ENCODE measurements at regions of chr2 and their contacts with region 1.

Region 1: DNA sequence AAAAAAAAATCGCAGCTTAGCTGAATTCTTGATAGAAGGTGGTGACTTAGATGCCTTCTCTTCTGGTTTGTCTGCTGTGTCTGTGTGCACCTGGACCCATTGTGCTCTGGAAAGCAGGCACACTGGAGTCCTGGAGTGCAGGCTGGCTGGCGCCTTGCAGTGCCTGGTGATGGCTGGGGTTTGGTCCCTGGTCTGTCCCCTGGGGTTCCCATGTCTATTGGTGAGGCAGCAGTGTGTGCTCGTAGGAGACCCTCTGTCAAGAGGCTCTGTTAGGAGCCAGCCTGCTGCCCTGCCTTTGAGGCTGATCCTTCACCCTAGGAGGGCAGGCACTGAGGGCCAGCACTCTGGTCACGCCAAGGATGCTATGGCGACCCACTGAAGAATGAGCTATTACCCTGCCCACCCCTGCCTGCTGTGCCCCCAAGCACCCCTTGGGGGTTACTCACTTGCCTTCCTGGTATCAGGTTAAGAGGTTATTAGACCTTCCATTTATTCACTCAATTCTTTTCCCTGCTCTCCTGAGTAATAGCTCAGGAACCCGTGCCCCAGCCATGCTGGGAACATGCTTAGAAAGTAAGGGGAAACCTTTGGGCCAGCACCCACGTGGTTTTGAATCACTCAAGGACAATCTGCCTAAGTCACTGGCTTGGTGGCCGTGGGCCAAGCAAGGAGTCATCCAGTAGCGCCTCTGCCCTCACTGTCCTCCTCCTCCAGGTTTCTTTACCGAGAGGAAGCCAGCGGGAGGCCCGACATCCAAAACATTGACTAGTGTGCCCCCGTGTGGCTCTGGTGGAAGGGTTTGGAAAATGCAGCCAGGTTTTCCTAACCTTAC is 284.5 kb downstream of the PRKCE start:
- DNase-seq: peak; percentile 90
- H3K4me3 ChIP-seq: no peak overlapping the region
- H3K27ac ChIP-seq: peak overlapping the region; percentile 51
- H3K4me1 ChIP-seq: peaks cover 20% of the 10 kb centered on the region
- H3K27me3 ChIP-seq: no peaks in the 10 kb centered on the region
- CTCF ChIP-seq: peak; percentile 73 to 76
- POLR2A ChIP-seq: no peak

Region 2: GRCh38 chr2:45585267-45585861 is 350.6 kb before region 1 on chr2:
- CTCF ChIA-PET with region 1: interaction called, 21 read pairs
- POLR2A ChIA-PET with region 1: no interaction called
- dilution Hi-C with region 1: no loop called
- intact Hi-C with region 1: loop called (anchors 1 kb)
- DNase-seq: peak; percentile 74
- H3K4me3 ChIP-seq: no peak overlapping the region
- H3K27ac ChIP-seq: no peak overlapping the region
- H3K4me1 ChIP-seq: peaks cover 3% of the 10 kb centered on the region
- H3K27me3 ChIP-seq: no peaks in the 10 kb centered on the region
- CTCF ChIP-seq: peak; percentile 58 to 59
- POLR2A ChIP-seq: no peak

Region 3: GRCh38 chr2:45650851-45651414 is 285.1 kb before region 1 on chr2:
- CTCF ChIA-PET with region 1: interaction called, 26 read pairs
- POLR2A ChIA-PET with region 1: no interaction called
- dilution Hi-C with region 1: no loop called
- intact Hi-C with region 1: no loop called
- DNase-seq: peak; percentile 96
- H3K4me3 ChIP-seq: peak overlapping the region; percentile 81 to 98 (median 88)
- H3K27ac ChIP-seq: peak overlapping the region; percentile 76
- H3K4me1 ChIP-seq: peaks cover 16% of the 10 kb centered on the region
- H3K27me3 ChIP-seq: no peaks in the 10 kb centered on the region
- CTCF ChIP-seq: peak; percentile 35 to 49
- POLR2A ChIP-seq: peak; percentile 86

Region 4: DNA sequence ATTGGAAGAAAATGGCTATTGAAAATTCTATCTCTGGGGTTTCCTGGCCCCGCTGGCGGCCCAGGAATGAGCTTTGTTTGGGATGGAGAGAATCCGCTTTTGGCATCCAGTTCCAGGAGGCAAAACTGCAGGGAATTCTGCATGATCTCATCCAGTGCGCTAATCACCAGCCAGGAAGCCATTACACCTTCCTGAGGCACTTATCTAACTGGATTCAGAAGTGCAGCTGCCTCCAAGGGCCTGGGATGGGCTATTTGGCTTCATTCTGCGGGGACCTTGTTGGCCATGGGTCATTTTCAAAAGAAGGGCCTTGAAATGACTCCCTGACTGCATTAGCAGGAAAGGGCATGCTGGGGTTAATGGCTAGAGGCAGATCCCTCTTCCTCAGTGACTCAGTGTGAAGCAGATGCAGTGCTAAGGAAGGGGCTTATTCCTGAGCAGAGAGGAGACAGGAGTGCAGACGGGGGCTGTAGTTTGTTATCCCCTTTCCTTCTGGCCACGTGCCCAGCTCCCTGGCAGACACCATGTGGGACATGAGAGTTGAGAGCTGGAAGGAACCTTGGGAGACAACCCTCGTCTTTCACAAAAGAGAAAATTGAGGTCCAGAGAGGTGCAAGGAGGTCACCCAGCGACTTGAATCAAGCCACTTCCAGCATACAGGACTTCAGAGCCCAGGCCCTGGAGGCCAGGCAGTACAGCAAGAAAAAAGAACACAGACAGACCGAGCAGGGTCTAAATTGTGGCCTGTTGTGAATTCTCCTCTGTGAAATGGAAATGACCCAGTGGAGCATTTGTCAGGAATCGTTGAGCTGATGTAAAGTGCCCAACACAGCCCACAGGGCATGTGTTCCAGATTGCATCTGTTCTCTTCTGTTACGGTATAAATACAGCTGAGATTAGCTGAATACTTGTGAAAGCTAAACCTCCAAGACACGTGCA is 122.7 kb before region 1 on chr2:
- CTCF ChIA-PET with region 1: interaction called, 17 read pairs
- POLR2A ChIA-PET with region 1: no interaction called
- dilution Hi-C with region 1: no loop called
- intact Hi-C with region 1: no loop called
- DNase-seq: peak; percentile 98
- H3K4me3 ChIP-seq: no peak overlapping the region
- H3K27ac ChIP-seq: peak overlapping the region; percentile 92
- H3K4me1 ChIP-seq: peaks cover 39% of the 10 kb centered on the region
- H3K27me3 ChIP-seq: no peaks in the 10 kb centered on the region
- CTCF ChIP-seq: no peak
- POLR2A ChIP-seq: no peak